ENCODE measurements at regions of chr15 and their contacts with region 1.

Region 1: DNA sequence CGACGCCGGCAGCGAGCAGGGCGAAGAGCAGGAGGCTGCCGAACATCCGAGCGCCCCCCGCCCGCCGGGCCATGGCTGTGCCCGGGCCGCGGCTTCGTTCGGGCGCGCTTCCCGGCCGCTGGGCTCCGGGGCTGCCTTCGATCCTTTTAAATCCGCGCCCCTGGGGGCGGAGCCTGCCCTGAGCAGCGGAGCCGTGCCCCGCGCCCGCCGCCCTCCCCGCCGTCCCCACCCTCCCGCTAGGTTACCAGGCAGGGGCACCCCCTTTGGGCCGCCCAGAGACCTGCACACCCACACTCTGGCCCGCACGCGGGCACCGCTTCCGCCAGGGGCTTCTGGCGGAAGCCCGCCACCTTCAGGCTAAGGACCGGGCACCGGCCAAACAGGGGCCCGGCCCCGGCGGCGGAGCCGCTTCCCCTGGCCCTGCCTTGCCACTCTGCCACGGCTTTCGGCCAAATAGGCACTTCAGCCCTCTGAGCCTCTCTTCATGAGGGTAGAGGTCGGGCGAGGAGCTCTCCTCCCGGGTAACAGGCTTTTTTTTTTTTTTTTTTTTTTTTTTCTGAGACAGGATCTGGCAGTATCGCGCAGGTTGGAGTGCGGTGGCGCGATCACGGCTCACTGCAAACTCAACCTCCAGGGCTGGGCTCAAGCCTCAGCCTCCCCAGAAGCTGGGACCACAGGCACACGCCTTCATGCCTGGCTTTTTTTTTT is at the start of gene NMB:
- DNase-seq: peak; percentile 78 to 90
- H3K4me3 ChIP-seq: peak within 1 kb of the TSS; percentile 67 to 82
- H3K27ac ChIP-seq: peak within 1 kb of the TSS; percentile 92
- H3K4me1 ChIP-seq: peaks cover 0 to 34% (median 24%) of the 10 kb centered on the region in 4 donors
- H3K27me3 ChIP-seq: no peaks in the 10 kb centered on the region
- CTCF ChIP-seq: peak; percentile 53 to 72

Region 2: GRCh38 chr15:84716036-84716799 is 58.0 kb after region 1 on chr15 and contains the start of gene SEC11A:
- intact Hi-C with region 1: loop called (anchors 2 kb)
- DNase-seq: peak; percentile 96 to 98
- H3K4me3 ChIP-seq: peak within 1 kb of the TSS; percentile 86 to 87
- H3K27ac ChIP-seq: peak within 1 kb of the TSS; percentile 87 to 90
- H3K4me1 ChIP-seq: peaks cover 0 to 32% (median 20%) of the 10 kb centered on the region in 4 donors
- H3K27me3 ChIP-seq: no peaks in the 10 kb centered on the region
- CTCF ChIP-seq: no peak

Region 3: GRCh38 chr15:84748274-84749110 is 90.3 kb after region 1 on chr15 and contains the start of gene ZNF592:
- intact Hi-C with region 1: loop called (anchors 5 kb)
- DNase-seq: peak; percentile 76 to 93
- H3K4me3 ChIP-seq: peak within 1 kb of the TSS; percentile 89 to 93
- H3K27ac ChIP-seq: peak within 1 kb of the TSS; percentile 96 to 100
- H3K4me1 ChIP-seq: peaks cover 0 to 65% (median 45%) of the 10 kb centered on the region in 4 donors
- H3K27me3 ChIP-seq: no peaks in the 10 kb centered on the region
- CTCF ChIP-seq: peak in 1 of 2 experiments; percentile 84

Region 4: GRCh38 chr15:84818261-84819131 is 160.3 kb after region 1 on chr15:
- intact Hi-C with region 1: loop called (anchors 5 kb)
- DNase-seq: peak; percentile 70 to 85
- H3K4me3 ChIP-seq: peak overlapping the region; percentile 58 to 64
- H3K27ac ChIP-seq: peak overlapping the region; percentile 99
- H3K4me1 ChIP-seq: peaks cover 0 to 81% (median 56%) of the 10 kb centered on the region in 4 donors
- H3K27me3 ChIP-seq: no peaks in the 10 kb centered on the region
- CTCF ChIP-seq: no peak

Region 5: DNA sequence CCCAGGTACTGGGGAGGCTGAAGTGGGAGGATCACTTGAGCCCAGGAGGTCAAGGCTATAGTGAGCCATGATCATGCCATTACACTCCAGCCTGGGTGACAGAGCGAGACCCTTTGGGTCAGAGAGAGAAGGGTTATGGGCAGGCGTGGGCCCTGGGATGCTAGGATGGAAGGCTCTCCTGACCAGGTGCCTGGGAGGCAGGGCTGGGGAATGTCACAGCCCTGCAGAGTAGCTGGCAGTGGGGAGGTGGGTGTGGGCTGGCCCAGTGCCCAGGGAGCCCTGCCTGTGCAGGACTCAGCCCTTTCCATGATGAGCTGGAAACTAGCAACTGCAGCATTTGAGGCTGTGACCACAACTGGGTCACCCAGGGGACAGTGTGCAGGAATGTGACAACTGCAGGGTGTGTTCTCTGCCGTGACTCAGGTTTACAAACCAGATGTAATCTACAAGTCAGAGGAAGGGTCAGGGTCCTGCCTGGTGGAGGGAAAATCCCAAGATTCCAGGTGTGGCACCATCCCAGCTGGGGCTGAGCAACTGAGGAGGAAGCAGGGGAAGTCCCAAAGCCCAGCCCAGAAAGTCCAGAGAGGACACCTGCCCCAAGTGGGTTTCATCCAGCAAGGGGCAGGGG is 271.6 kb after region 1 on chr15:
- intact Hi-C with region 1: loop called (anchors 5 kb)
- DNase-seq: no peak
- H3K4me3 ChIP-seq: no peak overlapping the region
- H3K27ac ChIP-seq: no peak overlapping the region
- H3K4me1 ChIP-seq: peaks cover 0 to 19% (median 11%) of the 10 kb centered on the region in 4 donors
- H3K27me3 ChIP-seq: no peaks in the 10 kb centered on the region
- CTCF ChIP-seq: no peak

Measured in tibial artery (tissue), 4 donors.